ENCODE measurements at regions of chr16 and their contacts with region 1.

Region 1: GRCh38 chr16:24753437-24753836 is 24.0 kb downstream of the TNRC6A start:
- DNase-seq: no peak
- H3K4me3 Mint-ChIP-seq: peak overlapping the region; percentile 15
- H3K27ac Mint-ChIP-seq: peak overlapping the region; percentile 51
- H3K4me1 Mint-ChIP-seq: peaks cover 35% of the 10 kb centered on the region
- H3K27me3 Mint-ChIP-seq: no peaks in the 10 kb centered on the region

Region 2: GRCh38 chr16:24645739-24646645 is 107.4 kb before region 1 on chr16:
- intact Hi-C with region 1: no loop called
- DNase-seq: no peak
- H3K4me3 Mint-ChIP-seq: no peak overlapping the region
- H3K27ac Mint-ChIP-seq: no peak overlapping the region
- H3K4me1 Mint-ChIP-seq: no peaks in the 10 kb centered on the region
- H3K27me3 Mint-ChIP-seq: peaks cover 3% of the 10 kb centered on the region

Region 3: DNA sequence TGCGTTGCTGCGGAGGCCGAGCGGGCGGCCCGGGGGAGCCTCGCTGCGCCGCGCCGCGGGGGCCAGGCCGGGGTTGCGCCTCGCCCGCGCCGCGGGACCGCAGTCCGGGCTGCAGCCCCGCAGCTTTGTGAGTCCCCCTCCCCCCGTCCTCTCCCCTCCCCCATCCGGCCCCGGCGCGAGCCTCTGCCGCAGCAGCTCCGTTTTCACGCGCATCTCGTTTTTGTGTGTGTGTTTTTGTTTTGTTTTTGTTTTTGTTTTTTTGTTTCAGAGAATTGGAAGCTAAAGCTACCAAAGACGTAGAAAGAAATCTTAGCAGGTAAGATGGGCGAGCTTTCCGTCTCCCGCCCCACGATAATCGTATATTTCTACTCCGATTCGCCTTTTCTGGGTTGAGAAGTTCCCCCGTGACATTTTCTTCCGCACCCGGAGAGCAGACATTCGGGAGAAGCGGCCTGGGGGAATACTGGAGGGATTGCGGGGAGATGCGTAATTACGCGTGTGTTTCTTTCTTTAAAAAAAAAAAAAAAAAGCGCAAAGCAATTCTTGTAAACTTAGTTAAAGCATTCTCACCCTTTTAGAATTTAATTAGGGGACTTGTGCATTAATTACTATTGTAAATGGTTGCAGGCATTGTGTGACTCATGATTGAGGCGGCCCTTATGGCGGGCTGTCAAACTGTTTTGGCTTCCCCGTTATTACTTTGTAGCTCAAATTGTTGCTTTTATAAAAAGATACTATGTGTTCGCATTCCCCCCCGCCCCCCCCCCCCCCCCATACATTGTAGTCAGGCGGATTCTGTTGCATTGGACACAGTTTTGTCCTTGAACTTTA is 23.2 kb before region 1 on chr16:
- intact Hi-C with region 1: loop called (anchors 2 kb)
- DNase-seq: no peak
- H3K4me3 Mint-ChIP-seq: peak overlapping the region; percentile 99
- H3K27ac Mint-ChIP-seq: peak overlapping the region; percentile 98
- H3K4me1 Mint-ChIP-seq: peaks cover 35% of the 10 kb centered on the region
- H3K27me3 Mint-ChIP-seq: peaks cover 2% of the 10 kb centered on the region

Measured in activated CD4-positive, alpha-beta T cell treated with anti-CD3 and anti-CD28 coated beads, Interleukin-2, amount 10 ng/mL, durations not matched to agents 24 days and 14 days (primary cell).